WTC11 (cell line): ENCODE measurements at regions of chr1 and their contacts with region 1.

Region 1: DNA sequence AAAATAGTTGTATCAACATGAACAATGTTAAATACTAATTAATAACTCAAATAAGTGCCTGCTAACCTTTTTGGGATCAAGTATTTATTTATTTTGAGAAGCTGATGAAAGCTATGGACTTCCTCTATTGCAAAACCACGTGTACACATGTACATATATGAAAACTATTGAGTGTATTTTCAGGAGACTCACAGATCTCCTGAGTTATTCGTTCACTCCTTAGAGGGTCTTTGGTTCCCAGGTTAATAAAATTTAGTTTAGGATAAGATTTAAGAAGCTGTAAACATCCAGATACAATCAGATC is 130.5 kb downstream of the DISC1 start:
- DNase-seq: no peak
- ATAC-seq: no peak
- H3K4me3 Mint-ChIP-seq: no peak overlapping the region
- H3K27ac Mint-ChIP-seq: no peak overlapping the region
- H3K4me1 Mint-ChIP-seq: no peaks in the 10 kb centered on the region
- H3K27me3 Mint-ChIP-seq: peaks cover 2% of the 10 kb centered on the region; the same call in 1 of the 2 replicates
- CTCF ChIP-seq: peak; percentile 15; the same call in 1 of the 2 replicates

Region 2: GRCh38 chr1:231735941-231736340 is 21.1 kb before region 1 on chr1:
- CTCF ChIA-PET with region 1: interaction called, 25 read pairs
- POLR2A ChIA-PET with region 1: no interaction called
- DNase-seq: no peak
- ATAC-seq: no peak
- H3K4me3 Mint-ChIP-seq: no peak overlapping the region
- H3K27ac Mint-ChIP-seq: no peak overlapping the region
- H3K4me1 Mint-ChIP-seq: no peaks in the 10 kb centered on the region
- H3K27me3 Mint-ChIP-seq: peaks cover 6% of the 10 kb centered on the region
- CTCF ChIP-seq: no peak

Region 3: DNA sequence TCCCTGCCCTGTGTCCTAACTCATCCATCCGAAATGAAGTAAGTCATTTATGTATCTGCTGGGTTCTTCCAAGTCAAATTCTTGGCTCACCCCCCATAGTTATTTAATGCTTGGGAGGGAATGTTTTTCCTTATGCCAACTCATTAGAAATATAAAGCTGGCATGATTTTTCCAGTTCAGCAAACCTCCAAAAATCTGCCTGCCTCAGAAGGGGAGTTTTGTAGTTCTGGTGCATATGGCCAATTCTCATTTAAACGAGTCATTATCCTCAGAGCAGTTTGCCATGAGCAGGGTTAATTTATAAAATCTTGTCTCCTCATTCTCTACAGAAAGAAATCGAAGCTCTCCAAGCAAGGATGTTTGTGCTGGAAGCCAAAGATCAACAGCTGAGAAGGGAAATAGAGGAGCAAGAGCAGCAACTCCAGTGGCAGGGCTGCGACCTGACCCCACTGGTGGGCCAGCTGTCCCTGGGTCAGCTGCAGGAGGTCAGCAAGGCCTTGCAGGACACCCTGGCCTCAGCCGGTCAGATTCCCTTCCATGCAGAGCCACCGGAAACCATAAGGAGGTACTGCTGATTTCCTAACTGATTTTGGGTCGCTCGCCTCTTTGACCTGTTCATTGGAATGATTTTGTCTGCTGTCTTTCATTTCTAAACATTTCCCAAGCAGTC is 13.6 kb after region 1 on chr1:
- CTCF ChIA-PET with region 1: interaction called, 41 read pairs
- POLR2A ChIA-PET with region 1: no interaction called
- DNase-seq: no peak
- ATAC-seq: no peak
- H3K4me3 Mint-ChIP-seq: no peak overlapping the region
- H3K27ac Mint-ChIP-seq: no peak overlapping the region
- H3K4me1 Mint-ChIP-seq: peaks cover 15% of the 10 kb centered on the region
- H3K27me3 Mint-ChIP-seq: no peaks in the 10 kb centered on the region
- CTCF ChIP-seq: no peak

Region 4: GRCh38 chr1:231781892-231782291 is 24.8 kb after region 1 on chr1:
- CTCF ChIA-PET with region 1: interaction called, 16 read pairs
- POLR2A ChIA-PET with region 1: no interaction called
- DNase-seq: no peak
- ATAC-seq: no peak; the same call in 1 of the 2 replicates
- H3K4me3 Mint-ChIP-seq: no peak overlapping the region
- H3K27ac Mint-ChIP-seq: no peak overlapping the region
- H3K4me1 Mint-ChIP-seq: peaks cover 8% of the 10 kb centered on the region
- H3K27me3 Mint-ChIP-seq: no peaks in the 10 kb centered on the region
- CTCF ChIP-seq: no peak

Region 5: DNA sequence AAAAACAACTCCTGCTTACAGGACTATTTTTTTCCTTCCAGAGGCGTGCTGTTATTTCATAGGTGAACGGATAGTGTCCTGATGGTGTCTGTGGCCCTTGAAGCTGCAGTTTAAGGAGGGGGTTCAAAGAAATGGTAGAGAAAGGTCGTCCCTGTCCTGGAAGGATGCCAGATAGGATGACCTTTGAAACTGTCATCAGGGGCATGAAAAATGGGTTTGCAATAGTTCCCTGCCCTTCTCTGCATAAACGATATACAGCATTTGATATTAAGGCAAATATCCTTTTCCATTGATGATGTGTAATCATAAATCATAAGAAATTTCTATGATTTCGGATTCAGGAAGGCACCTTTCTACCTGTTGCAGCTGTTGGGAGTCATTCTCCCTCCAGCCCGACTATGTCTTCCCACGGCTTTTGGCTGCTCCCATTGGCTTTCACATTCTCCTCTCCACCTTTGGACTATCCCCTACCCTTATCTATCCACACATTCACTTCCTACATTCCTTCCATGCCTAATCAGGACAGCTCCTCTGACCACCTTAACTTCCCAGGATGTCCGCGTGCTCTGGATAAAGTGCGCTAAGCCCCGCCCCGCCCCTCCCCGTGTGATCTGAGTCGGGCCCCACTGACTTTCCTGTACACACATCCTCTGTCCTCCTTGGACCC is 79.3 kb after region 1 on chr1:
- CTCF ChIA-PET with region 1: no interaction called
- POLR2A ChIA-PET with region 1: no interaction called
- DNase-seq: no peak
- ATAC-seq: peak; percentile 62
- H3K4me3 Mint-ChIP-seq: no peak overlapping the region
- H3K27ac Mint-ChIP-seq: no peak overlapping the region
- H3K4me1 Mint-ChIP-seq: peaks cover 21% of the 10 kb centered on the region
- H3K27me3 Mint-ChIP-seq: no peaks in the 10 kb centered on the region; the same call in 1 of the 2 replicates
- CTCF ChIP-seq: no peak

Region 6: GRCh38 chr1:231872461-231872910 is 115.4 kb after region 1 on chr1:
- CTCF ChIA-PET with region 1: no interaction called
- POLR2A ChIA-PET with region 1: no interaction called
- DNase-seq: no peak
- ATAC-seq: no peak
- H3K4me3 Mint-ChIP-seq: no peak overlapping the region
- H3K27ac Mint-ChIP-seq: no peak overlapping the region
- H3K4me1 Mint-ChIP-seq: peaks cover 17% of the 10 kb centered on the region
- H3K27me3 Mint-ChIP-seq: peaks cover 11% of the 10 kb centered on the region
- CTCF ChIP-seq: no peak